Left cardiac atrium (tissue), 4 donors: ENCODE measurements at regions of chr9 and their contacts with region 1.

Region 1: GRCh38 chr9:99906403-99907207 is at the start of gene STX17:
- DNase-seq: peak; percentile 79
- ATAC-seq: peak; percentile 98
- total RNA-seq, gene STX17: 17.3 to 19.9 TPM

Region 2: DNA sequence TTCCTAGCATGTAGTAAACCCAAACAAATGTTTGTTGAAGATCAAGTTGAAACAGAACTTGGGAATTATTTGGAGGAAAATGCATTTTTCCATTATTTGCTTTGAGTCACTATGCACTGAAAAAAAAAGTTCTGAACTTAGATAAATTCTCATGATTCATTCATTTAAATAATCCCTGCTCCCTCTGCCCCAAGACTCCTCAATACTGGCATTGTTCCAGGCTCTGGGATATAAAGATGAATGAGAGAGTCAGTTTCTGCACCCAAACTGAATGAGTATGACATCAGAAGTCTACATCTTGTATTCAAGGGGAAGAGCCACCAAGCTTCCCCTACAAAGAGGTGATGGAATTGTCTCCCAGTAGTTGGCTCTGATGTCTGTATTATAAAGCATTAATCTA is 560.7 kb before region 1 on chr9:
- intact Hi-C with region 1: loop called in 1 of 2 experiments (anchors 5 kb)
- DNase-seq: no peak
- ATAC-seq: no peak